Naive thymus-derived CD4-positive, alpha-beta T cell (primary cell): ENCODE measurements at regions of chr14 and their contacts with region 1.

Region 1: DNA sequence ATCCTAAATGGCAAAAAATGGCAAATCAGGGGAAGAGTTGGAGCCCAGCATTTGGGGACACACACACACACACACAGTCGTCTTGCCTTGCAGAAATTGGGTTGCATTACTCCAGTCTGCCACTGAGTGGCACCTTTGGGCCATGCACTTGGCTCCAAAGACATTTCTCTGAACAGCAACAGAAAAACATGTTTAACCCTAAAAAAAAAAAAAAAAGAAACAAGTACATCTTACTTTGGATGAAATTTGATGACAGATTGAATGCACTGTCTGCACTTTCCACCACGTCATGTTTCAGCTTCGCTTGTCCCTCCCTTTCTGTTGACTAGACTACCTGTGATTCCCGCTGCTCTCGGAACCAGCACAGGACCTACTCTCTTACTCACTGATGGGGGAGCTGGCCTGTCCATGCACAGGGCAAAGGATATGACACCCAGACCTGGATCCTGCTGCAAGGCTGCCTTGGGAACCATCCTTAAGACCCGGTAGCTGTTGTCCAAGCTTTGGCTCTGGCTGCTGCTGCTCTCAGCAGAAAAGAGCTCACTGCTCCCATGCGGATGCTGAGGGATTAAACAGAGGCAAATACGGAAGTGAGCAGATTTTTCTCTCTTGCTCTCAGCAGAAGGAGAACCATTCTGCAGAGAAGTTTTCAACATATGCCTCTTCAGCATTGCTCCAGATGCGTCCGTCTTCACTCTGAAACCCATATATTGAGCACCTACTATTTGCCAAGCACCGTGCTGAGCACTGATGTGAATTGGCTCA is 376.8 kb downstream of the DPF3 start:
- DNase-seq: peak; percentile 42 to 78 (median 74)
- ATAC-seq: peak; percentile 75
- H3K4me3 ChIP-seq: no peak overlapping the region
- H3K4me3 Mint-ChIP-seq: peak overlapping the region in 9 of 10 donors; percentile 11 to 77 (median 40)
- H3K27ac ChIP-seq: no peak overlapping the region
- H3K27ac Mint-ChIP-seq: peak overlapping the region in 4 of 9 donors; percentile 41 to 61 (median 48)
- H3K4me1 ChIP-seq: peaks cover 28 to 36% of the 10 kb centered on the region in 2 donors
- H3K4me1 Mint-ChIP-seq: peaks cover 28 to 82% (median 44%) of the 10 kb centered on the region in 7 donors
- H3K27me3 ChIP-seq: no peaks in the 10 kb centered on the region
- H3K27me3 Mint-ChIP-seq: peaks cover 0 to under 1% (median 0%) of the 10 kb centered on the region in 5 donors

Region 2: DNA sequence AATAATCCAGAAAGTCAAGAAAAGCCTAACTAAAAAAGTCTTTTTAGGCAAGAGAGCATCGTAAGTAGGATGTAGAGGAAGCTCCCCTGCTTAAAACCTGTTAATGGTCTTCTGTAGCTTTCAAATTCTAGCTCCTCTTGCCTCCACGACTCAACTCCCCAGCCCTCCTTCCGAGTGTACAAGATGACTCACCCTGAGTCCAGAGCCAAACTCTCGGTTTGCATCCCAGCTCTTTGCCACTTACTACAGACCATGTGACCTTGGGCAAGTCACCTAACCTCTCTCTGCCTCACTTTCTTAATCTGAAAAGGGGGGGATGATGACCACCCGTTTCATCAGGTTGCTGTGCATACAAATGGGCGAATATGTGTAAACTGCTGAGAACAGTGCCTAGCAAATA is 83.6 kb before region 1 on chr14:
- CTCF ChIA-PET with region 1: no interaction called
- POLR2A ChIA-PET with region 1: no interaction called
- intact Hi-C with region 1: no loop called
- DNase-seq: no peak
- ATAC-seq: no peak
- H3K4me3 ChIP-seq: no peak overlapping the region
- H3K4me3 Mint-ChIP-seq: no peak overlapping the region
- H3K27ac ChIP-seq: no peak overlapping the region
- H3K27ac Mint-ChIP-seq: no peak overlapping the region
- H3K4me1 ChIP-seq: no peaks in the 10 kb centered on the region
- H3K4me1 Mint-ChIP-seq: peaks cover 0 to 61% (median 0%) of the 10 kb centered on the region in 7 donors
- H3K27me3 ChIP-seq: no peaks in the 10 kb centered on the region
- H3K27me3 Mint-ChIP-seq: no peaks in the 10 kb centered on the region

Region 3: GRCh38 chr14:72476657-72477499 is 40.2 kb before region 1 on chr14:
- CTCF ChIA-PET with region 1: interaction called, 3 read pairs
- POLR2A ChIA-PET with region 1: no interaction called
- intact Hi-C with region 1: loop called in 1 of 2 experiments (anchors 2 kb)
- DNase-seq: peak in 7 of 9 donors; percentile 20 to 75 (median 31)
- ATAC-seq: peak; percentile 85
- H3K4me3 ChIP-seq: peak overlapping the region; percentile 25
- H3K4me3 Mint-ChIP-seq: peak overlapping the region; percentile 34 to 83 (median 72)
- H3K27ac ChIP-seq: peak overlapping the region; percentile 4
- H3K27ac Mint-ChIP-seq: peak overlapping the region; percentile 15 to 93 (median 60)
- H3K4me1 ChIP-seq: peaks cover 10 to 21% of the 10 kb centered on the region in 2 donors
- H3K4me1 Mint-ChIP-seq: peaks cover 24 to 82% (median 45%) of the 10 kb centered on the region in 7 donors
- H3K27me3 ChIP-seq: no peaks in the 10 kb centered on the region
- H3K27me3 Mint-ChIP-seq: peaks cover 0 to 3% (median 0%) of the 10 kb centered on the region in 5 donors

Region 4: GRCh38 chr14:72594099-72594901 is 77.2 kb after region 1 on chr14:
- CTCF ChIA-PET with region 1: no interaction called
- POLR2A ChIA-PET with region 1: no interaction called
- intact Hi-C with region 1: loop called in 1 of 2 experiments (anchors 1 kb)
- DNase-seq: peak in 6 of 9 donors; percentile 32 to 51 (median 36)
- ATAC-seq: peak; percentile 86
- H3K4me3 ChIP-seq: no peak overlapping the region
- H3K4me3 Mint-ChIP-seq: peak overlapping the region; percentile 18 to 75 (median 68)
- H3K27ac ChIP-seq: no peak overlapping the region
- H3K27ac Mint-ChIP-seq: peak overlapping the region; percentile 7 to 83 (median 52)
- H3K4me1 ChIP-seq: peaks cover 20 to 45% of the 10 kb centered on the region in 2 donors
- H3K4me1 Mint-ChIP-seq: peaks cover 28 to 63% (median 55%) of the 10 kb centered on the region in 7 donors
- H3K27me3 ChIP-seq: peaks cover 0 to 6% of the 10 kb centered on the region in 2 donors
- H3K27me3 Mint-ChIP-seq: peaks cover 0 to 39% (median 9%) of the 10 kb centered on the region in 5 donors

Region 5: DNA sequence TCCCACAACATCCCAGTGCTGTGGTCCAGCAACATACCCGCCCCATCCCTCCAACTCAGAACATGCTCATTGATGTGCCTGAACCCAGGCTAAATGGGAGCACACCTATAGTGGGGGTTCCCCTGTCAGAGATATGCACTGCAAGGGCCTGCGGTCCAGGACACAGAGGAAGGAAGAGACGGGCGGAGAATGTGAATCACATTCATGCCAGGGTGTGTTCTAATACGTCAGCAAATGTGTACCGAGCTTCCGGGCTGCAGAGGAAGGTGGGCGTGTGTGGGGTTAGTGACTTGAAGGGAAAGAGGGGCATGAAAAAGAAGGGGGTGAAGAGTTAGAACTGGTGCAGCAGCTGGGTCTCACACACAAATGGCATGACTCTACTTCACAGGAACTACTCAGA is 293.1 kb after region 1 on chr14:
- CTCF ChIA-PET with region 1: no interaction called
- POLR2A ChIA-PET with region 1: no interaction called
- intact Hi-C with region 1: loop called in 1 of 2 experiments (anchors 1 kb)
- DNase-seq: peak in 7 of 9 donors; percentile 15 to 68 (median 38)
- ATAC-seq: peak; percentile 85
- H3K4me3 ChIP-seq: no peak overlapping the region
- H3K4me3 Mint-ChIP-seq: peak overlapping the region in 8 of 10 donors; percentile 16 to 78 (median 56)
- H3K27ac ChIP-seq: no peak overlapping the region
- H3K27ac Mint-ChIP-seq: peak overlapping the region in 8 of 9 donors; percentile 3 to 77 (median 64)
- H3K4me1 ChIP-seq: peaks cover 7 to 8% of the 10 kb centered on the region in 2 donors
- H3K4me1 Mint-ChIP-seq: peaks cover 13 to 23% (median 14%) of the 10 kb centered on the region in 7 donors
- H3K27me3 ChIP-seq: no peaks in the 10 kb centered on the region
- H3K27me3 Mint-ChIP-seq: no peaks in the 10 kb centered on the region

Region 6: GRCh38 chr14:72904840-72905561 is 387.9 kb after region 1 on chr14:
- CTCF ChIA-PET with region 1: interaction called, 116 read pairs
- POLR2A ChIA-PET with region 1: no interaction called
- intact Hi-C with region 1: loop called (anchors 1 kb)
- DNase-seq: peak; percentile 18 to 78 (median 64)
- ATAC-seq: peak; percentile 85
- H3K4me3 ChIP-seq: no peak overlapping the region
- H3K4me3 Mint-ChIP-seq: no peak overlapping the region
- H3K27ac ChIP-seq: no peak overlapping the region
- H3K27ac Mint-ChIP-seq: peak overlapping the region in 1 of 9 donors; percentile 7
- H3K4me1 ChIP-seq: no peaks in the 10 kb centered on the region
- H3K4me1 Mint-ChIP-seq: peaks cover 0 to 24% (median 0%) of the 10 kb centered on the region in 7 donors
- H3K27me3 ChIP-seq: no peaks in the 10 kb centered on the region
- H3K27me3 Mint-ChIP-seq: peaks cover 1 to 42% (median 7%) of the 10 kb centered on the region in 5 donors

Region 7: DNA sequence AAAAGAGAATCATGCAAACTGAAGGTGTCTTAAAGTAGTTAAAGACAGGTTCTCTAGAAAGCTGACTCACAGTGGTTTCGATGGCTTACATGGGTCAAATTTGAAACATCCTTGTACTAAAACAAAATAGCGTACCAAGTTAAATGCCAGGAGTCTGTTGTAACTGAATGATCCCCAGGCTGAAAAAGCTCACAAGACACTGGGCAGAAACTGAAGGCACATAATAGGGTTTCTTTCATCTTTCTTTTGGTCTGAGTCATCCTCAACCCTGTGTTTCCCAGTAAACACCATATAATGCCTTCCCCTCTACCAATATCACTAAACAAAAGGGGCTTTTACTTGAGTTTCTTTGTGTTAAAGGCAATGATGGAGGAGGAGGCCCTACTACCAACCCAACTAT is 497.0 kb after region 1 on chr14:
- CTCF ChIA-PET with region 1: no interaction called
- POLR2A ChIA-PET with region 1: no interaction called
- intact Hi-C with region 1: no loop called
- DNase-seq: no peak
- ATAC-seq: no peak
- H3K4me3 ChIP-seq: no peak overlapping the region
- H3K4me3 Mint-ChIP-seq: peak overlapping the region in 1 of 10 donors; percentile 12
- H3K27ac ChIP-seq: no peak overlapping the region
- H3K27ac Mint-ChIP-seq: peak overlapping the region in 1 of 9 donors; percentile 21
- H3K4me1 ChIP-seq: no peaks in the 10 kb centered on the region
- H3K4me1 Mint-ChIP-seq: peaks cover 13 to 59% (median 42%) of the 10 kb centered on the region in 7 donors
- H3K27me3 ChIP-seq: no peaks in the 10 kb centered on the region
- H3K27me3 Mint-ChIP-seq: no peaks in the 10 kb centered on the region

Region 8: DNA sequence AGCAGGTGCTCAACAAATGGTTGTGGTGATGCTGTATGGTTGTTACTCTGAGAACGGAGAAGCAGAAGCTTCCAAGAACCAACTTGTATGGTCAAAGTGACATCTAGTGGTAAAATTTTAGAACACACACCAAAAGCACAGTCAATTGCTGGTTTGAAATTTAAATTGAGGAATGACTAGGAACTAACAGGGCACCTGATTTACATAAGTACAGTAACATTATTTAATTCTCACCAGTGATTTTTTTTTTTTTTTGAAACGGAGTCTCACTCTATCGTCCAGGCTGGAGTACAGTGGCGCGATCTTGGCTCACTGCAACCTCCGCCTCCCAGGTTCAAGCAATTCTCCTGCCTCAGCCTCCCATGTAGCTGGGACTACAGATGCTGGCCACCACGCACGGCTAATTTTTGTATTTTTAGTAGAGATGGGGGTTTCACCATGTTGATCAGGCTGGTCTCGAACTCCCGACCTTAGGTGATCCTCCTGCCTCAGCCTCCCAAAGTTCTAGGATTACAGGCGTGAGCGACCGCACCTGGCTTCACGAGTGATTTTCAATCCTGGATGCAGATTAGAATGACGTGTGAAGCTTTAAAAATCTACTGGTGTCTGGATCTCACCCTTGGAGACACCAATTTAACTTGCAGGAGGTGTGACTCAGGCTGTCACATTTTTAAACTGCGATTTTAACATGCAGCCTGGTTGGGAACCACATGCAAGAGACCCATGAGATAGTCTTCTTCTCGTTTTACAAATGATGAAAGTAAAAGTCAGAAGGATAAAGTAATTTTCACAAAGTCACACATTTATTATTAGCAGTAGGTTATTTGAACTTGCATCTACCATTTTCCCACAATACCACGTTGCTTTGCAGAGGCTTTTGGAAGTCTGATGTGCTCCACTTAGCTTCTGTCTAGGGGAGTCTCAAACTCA is 955.3 kb after region 1 on chr14:
- CTCF ChIA-PET with region 1: no interaction called
- POLR2A ChIA-PET with region 1: no interaction called
- intact Hi-C with region 1: loop called in 1 of 2 experiments (anchors 1 kb)
- DNase-seq: peak in 7 of 9 donors; percentile 37 to 71 (median 54)
- ATAC-seq: peak; percentile 84
- H3K4me3 ChIP-seq: no peak overlapping the region
- H3K4me3 Mint-ChIP-seq: no peak overlapping the region
- H3K27ac ChIP-seq: no peak overlapping the region
- H3K27ac Mint-ChIP-seq: no peak overlapping the region
- H3K4me1 ChIP-seq: no peaks in the 10 kb centered on the region
- H3K4me1 Mint-ChIP-seq: peaks cover 0 to 11% (median 4%) of the 10 kb centered on the region in 7 donors
- H3K27me3 ChIP-seq: no peaks in the 10 kb centered on the region
- H3K27me3 Mint-ChIP-seq: no peaks in the 10 kb centered on the region

Region 9: DNA sequence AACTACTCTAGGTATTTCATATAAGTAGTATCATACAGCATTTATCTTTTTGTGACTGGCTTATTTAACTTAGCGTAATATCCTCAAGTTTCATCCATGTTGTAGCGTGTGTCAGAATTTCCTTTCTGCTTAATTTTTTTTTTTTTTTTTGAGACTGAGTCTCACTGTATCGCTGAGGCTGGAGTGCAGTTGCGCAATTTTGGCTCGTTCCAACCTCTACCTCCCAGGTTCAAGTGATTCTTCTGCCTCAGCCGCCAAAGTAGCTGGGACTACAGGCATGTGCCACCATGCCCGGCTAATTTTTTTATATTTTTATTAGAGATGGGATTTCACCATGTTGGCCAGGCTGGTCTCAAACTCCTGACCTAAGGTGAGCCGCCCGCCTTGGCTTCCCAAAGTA is 1168.2 kb after region 1 on chr14:
- CTCF ChIA-PET with region 1: no interaction called
- POLR2A ChIA-PET with region 1: no interaction called
- intact Hi-C with region 1: no loop called
- DNase-seq: no peak
- ATAC-seq: no peak
- H3K4me3 ChIP-seq: no peak overlapping the region
- H3K4me3 Mint-ChIP-seq: no peak overlapping the region
- H3K27ac ChIP-seq: no peak overlapping the region
- H3K27ac Mint-ChIP-seq: no peak overlapping the region
- H3K4me1 ChIP-seq: no peaks in the 10 kb centered on the region
- H3K4me1 Mint-ChIP-seq: peaks cover 0 to 3% (median 0%) of the 10 kb centered on the region in 7 donors
- H3K27me3 ChIP-seq: no peaks in the 10 kb centered on the region
- H3K27me3 Mint-ChIP-seq: no peaks in the 10 kb centered on the region